CD4-positive, alpha-beta T cell (primary cell): ENCODE measurements at regions of chr12 and their contacts with region 1.

Region 1: GRCh38 chr12:121334513-121335343 is 17.5 kb downstream of the ANAPC5 start:
- DNase-seq: peak in 4 of 14 experiments; percentile 24 to 75 (median 71)
- ATAC-seq: peak; percentile 82
- H3K4me3 ChIP-seq: no peak overlapping the region
- H3K4me3 Mint-ChIP-seq: no peak overlapping the region
- H3K27ac ChIP-seq: no peak overlapping the region
- H3K27ac Mint-ChIP-seq: peak overlapping the region; percentile 58
- H3K4me1 ChIP-seq: no peaks in the 10 kb centered on the region
- H3K4me1 Mint-ChIP-seq: peaks cover 7% of the 10 kb centered on the region
- H3K27me3 ChIP-seq: no peaks in the 10 kb centered on the region
- H3K27me3 Mint-ChIP-seq: no peaks in the 10 kb centered on the region
- CTCF ChIP-seq: peak; percentile 95

Region 2: DNA sequence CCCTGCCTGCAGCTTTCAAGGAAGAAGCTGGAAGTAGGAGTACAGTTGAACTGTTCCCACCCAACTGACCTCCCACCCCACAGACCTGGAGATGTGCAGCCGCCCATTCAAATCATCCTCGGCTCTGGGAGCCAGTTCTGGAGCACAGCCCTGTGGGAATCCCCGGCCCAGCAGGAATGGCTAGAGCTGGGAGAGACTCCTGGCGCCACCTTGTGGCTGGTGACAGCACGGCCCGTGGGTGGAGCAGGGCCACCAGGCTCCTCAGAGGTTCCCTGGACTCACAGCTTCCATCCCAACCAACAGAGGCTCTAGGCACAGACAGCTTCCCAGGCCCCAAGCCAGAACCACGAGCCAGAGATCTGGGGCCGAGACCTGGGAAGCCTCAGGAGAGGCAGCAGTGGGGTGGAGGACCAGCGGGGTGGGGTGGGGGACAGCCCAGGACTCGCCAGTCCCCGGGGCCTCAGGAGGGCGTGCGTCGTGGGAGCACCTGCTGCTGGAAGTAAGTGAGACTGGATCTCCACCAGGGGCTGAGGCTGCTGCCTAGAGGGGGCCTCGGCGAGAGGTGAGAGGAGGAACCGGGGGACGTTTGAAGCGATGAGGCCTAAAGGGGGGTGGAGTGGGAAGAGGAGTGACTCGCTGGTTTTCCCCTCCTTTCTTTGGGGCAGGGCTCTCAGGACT is 108.6 kb after region 1 on chr12:
- CTCF ChIA-PET with region 1: interaction called, 13 read pairs
- POLR2A ChIA-PET with region 1: no interaction called
- intact Hi-C with region 1: loop called in 1 of 2 experiments (anchors 1 kb)
- DNase-seq: peak; percentile 43 to 79 (median 60)
- ATAC-seq: peak; percentile 84
- H3K4me3 ChIP-seq: no peak overlapping the region
- H3K4me3 Mint-ChIP-seq: no peak overlapping the region
- H3K27ac ChIP-seq: no peak overlapping the region
- H3K27ac Mint-ChIP-seq: no peak overlapping the region
- H3K4me1 ChIP-seq: no peaks in the 10 kb centered on the region
- H3K4me1 Mint-ChIP-seq: peaks cover 4% of the 10 kb centered on the region
- H3K27me3 ChIP-seq: no peaks in the 10 kb centered on the region
- H3K27me3 Mint-ChIP-seq: no peaks in the 10 kb centered on the region
- CTCF ChIP-seq: peak; percentile 86

Region 3: GRCh38 chr12:121741743-121742142 is 407.0 kb after region 1 on chr12:
- CTCF ChIA-PET with region 1: no interaction called
- POLR2A ChIA-PET with region 1: no interaction called
- intact Hi-C with region 1: no loop called
- DNase-seq: no peak
- ATAC-seq: no peak
- H3K4me3 ChIP-seq: no peak overlapping the region
- H3K4me3 Mint-ChIP-seq: no peak overlapping the region
- H3K27ac ChIP-seq: no peak overlapping the region
- H3K27ac Mint-ChIP-seq: no peak overlapping the region
- H3K4me1 ChIP-seq: no peaks in the 10 kb centered on the region
- H3K4me1 Mint-ChIP-seq: no peaks in the 10 kb centered on the region
- H3K27me3 ChIP-seq: no peaks in the 10 kb centered on the region
- H3K27me3 Mint-ChIP-seq: no peaks in the 10 kb centered on the region
- CTCF ChIP-seq: no peak